ENCODE measurements at regions of chr10 and their contacts with region 1.

Region 1: GRCh38 chr10:29900865-29901264 is 158.5 kb downstream of the JCAD start:
- DNase-seq: no peak
- H3K4me3 Mint-ChIP-seq: no peak overlapping the region
- H3K27ac Mint-ChIP-seq: no peak overlapping the region
- H3K4me1 Mint-ChIP-seq: no peaks in the 10 kb centered on the region
- H3K27me3 Mint-ChIP-seq: peaks cover 9% of the 10 kb centered on the region

Region 2: DNA sequence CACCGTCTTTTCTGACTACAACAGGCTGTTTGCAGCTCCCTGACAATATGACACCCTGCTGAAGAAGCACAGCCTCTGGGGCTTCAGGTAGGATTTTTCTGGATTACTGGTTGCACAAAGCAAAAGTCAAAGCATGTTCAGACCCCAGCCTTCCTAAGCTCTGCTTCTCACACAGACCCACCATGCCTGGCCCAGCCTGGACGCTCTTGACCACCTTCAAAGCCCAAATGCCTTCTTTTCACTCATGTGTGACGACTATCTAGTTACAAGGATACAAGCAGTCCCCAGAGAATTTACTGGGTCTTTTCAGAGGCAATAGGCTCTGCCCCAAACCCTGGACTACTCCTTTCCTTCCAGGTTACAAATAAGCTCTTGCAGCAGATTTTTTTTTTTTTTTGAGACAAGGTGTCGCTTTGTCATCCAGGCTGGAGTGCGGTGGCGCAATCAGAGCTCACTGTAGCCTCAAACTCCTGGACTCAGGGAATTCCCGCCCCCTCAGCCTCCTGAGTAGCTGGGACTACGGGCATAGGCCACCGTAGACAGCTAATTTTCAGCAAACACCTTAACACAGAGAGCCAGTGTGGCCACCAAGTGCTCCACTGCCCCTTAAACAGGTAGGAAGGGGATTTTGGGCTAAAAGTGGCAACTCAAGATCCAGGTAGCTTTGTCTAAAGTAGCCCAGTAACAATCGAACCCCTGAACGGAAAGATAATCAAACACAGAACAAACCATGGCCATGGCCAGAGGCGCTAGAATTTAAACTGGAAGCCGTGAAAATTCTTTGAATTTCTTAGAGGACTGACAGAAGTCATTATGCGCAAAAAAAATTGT is 282.3 kb before region 1 on chr10:
- CTCF ChIA-PET with region 1: no interaction called
- POLR2A ChIA-PET with region 1: no interaction called
- DNase-seq: no peak
- H3K4me3 Mint-ChIP-seq: no peak overlapping the region
- H3K27ac Mint-ChIP-seq: no peak overlapping the region
- H3K4me1 Mint-ChIP-seq: no peaks in the 10 kb centered on the region
- H3K27me3 Mint-ChIP-seq: no peaks in the 10 kb centered on the region

Region 3: DNA sequence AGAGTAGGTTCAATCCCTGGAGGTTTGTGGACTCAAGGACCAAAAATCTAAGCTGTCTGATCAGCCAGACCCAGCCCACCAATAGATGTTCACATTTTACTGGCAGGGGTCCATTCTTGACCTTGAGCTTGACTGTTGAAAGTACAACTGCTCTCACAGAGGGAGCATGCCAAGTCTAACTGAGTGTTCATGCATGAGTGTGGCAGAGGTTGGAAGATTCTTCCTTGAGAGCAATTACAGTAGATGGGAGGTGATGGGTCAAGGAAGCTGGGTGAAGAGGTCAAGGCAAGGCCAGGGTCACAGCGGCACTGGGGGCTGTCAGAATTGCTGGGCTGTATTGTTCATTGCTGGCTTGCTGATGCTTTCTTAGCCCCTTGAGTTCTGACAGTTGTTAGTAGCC is 63.3 kb before region 1 on chr10:
- CTCF ChIA-PET with region 1: interaction called, 4 read pairs
- POLR2A ChIA-PET with region 1: interaction called, 15 read pairs
- DNase-seq: no peak
- H3K4me3 Mint-ChIP-seq: no peak overlapping the region
- H3K27ac Mint-ChIP-seq: no peak overlapping the region
- H3K4me1 Mint-ChIP-seq: no peaks in the 10 kb centered on the region
- H3K27me3 Mint-ChIP-seq: peaks cover 3% of the 10 kb centered on the region